CD4-positive, alpha-beta T cell (primary cell): ENCODE measurements at regions of chr5 and their contacts with region 1.

Region 1: GRCh38 chr5:172044631-172045314 is 38.3 kb upstream of the FBXW11 start:
- DNase-seq: no peak
- ATAC-seq: no peak
- H3K4me3 ChIP-seq: no peak overlapping the region
- H3K4me3 Mint-ChIP-seq: no peak overlapping the region
- H3K27ac ChIP-seq: no peak overlapping the region
- H3K27ac Mint-ChIP-seq: no peak overlapping the region
- H3K4me1 ChIP-seq: peaks cover 7% of the 10 kb centered on the region
- H3K4me1 Mint-ChIP-seq: peaks cover 21% of the 10 kb centered on the region
- H3K27me3 ChIP-seq: no peaks in the 10 kb centered on the region
- H3K27me3 Mint-ChIP-seq: no peaks in the 10 kb centered on the region
- CTCF ChIP-seq: no peak

Region 2: GRCh38 chr5:171484460-171484899 is 560.3 kb before region 1 on chr5:
- CTCF ChIA-PET with region 1: no interaction called
- POLR2A ChIA-PET with region 1: no interaction called
- intact Hi-C with region 1: loop called in 1 of 2 experiments (anchors 10 kb)
- DNase-seq: peak; percentile 13 to 62 (median 36)
- ATAC-seq: peak; percentile 51
- H3K4me3 ChIP-seq: no peak overlapping the region
- H3K4me3 Mint-ChIP-seq: no peak overlapping the region
- H3K27ac ChIP-seq: no peak overlapping the region
- H3K27ac Mint-ChIP-seq: no peak overlapping the region
- H3K4me1 ChIP-seq: peaks cover 4% of the 10 kb centered on the region
- H3K4me1 Mint-ChIP-seq: peaks cover 5% of the 10 kb centered on the region
- H3K27me3 ChIP-seq: no peaks in the 10 kb centered on the region
- H3K27me3 Mint-ChIP-seq: peaks cover 7% of the 10 kb centered on the region
- CTCF ChIP-seq: peak; percentile 71

Region 3: DNA sequence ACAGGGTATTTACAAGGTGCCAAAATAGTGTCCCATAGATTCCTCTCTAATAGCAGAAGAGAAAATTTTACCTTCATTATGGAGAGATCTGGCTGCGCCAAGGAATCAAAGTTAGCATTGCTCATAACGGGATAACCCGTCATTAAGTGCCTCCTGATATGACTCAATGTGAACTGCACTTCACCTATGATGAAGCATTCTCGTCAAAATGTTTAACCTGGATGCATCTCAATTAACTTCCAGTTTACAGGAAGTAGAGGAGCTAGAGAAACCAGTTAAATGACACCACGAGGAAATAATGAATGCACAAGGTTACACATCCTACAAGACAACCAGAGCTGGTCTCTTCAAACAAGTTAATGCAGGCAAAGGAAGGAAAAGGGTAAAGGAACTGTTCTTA is 55.5 kb before region 1 on chr5:
- CTCF ChIA-PET with region 1: no interaction called
- POLR2A ChIA-PET with region 1: no interaction called
- intact Hi-C with region 1: no loop called
- DNase-seq: no peak
- ATAC-seq: no peak
- H3K4me3 ChIP-seq: no peak overlapping the region
- H3K4me3 Mint-ChIP-seq: no peak overlapping the region
- H3K27ac ChIP-seq: no peak overlapping the region
- H3K27ac Mint-ChIP-seq: peak overlapping the region; percentile 24
- H3K4me1 ChIP-seq: peaks cover 13% of the 10 kb centered on the region
- H3K4me1 Mint-ChIP-seq: peaks cover 63% of the 10 kb centered on the region
- H3K27me3 ChIP-seq: no peaks in the 10 kb centered on the region
- H3K27me3 Mint-ChIP-seq: no peaks in the 10 kb centered on the region
- CTCF ChIP-seq: no peak

Region 4: DNA sequence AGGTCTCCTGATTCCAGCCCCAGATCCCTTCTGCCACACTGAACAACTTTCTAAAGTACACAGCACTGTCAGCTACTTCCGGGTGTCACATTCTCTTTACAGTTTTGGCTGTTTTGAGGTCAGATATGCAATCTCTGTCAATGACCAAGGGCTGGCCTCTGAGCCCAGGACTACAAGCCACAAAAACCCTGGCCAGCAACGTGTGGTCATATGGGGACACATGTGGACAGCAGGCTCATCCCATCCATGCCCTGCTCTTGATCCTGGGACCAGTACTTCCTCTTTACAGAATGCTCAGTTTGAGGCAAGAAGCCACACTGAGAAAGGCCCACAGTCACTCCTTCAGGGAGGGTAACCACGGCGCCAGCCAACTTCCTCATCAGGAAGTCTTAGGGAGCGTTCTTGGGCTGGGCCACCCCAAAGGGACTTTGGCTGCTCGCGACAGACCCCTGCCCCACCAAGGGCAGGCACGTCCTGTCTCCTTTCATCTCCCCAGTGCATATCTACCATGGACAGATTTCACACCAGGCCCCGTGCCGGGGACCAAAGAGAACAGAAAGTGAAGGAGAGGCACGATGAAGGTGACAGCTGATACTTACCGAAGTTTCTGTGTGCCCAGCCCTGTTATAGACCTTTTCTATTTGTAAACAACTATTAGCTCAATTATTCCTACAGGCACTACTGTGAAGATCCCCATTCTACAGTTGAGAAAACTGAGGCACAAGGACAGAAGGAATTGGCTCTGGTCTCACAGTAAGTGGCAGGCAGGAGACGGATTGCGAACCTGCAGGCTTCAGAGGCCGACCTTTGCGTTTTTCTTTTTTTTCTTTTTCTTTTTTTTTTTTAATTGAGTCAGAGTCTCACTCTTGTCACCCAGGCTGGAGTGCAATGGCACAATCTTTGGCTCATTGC is 106.0 kb after region 1 on chr5:
- CTCF ChIA-PET with region 1: no interaction called
- POLR2A ChIA-PET with region 1: no interaction called
- intact Hi-C with region 1: no loop called
- DNase-seq: peak in 5 of 14 experiments; percentile 14 to 69 (median 48)
- ATAC-seq: peak; percentile 62
- H3K4me3 ChIP-seq: peak overlapping the region; percentile 23
- H3K4me3 Mint-ChIP-seq: peak overlapping the region; percentile 25
- H3K27ac ChIP-seq: peak overlapping the region; percentile 73 to 76
- H3K27ac Mint-ChIP-seq: peak overlapping the region; percentile 93
- H3K4me1 ChIP-seq: peaks cover 87% of the 10 kb centered on the region
- H3K4me1 Mint-ChIP-seq: peaks cover 85% of the 10 kb centered on the region
- H3K27me3 ChIP-seq: no peaks in the 10 kb centered on the region
- H3K27me3 Mint-ChIP-seq: no peaks in the 10 kb centered on the region
- CTCF ChIP-seq: no peak